Heart left ventricle (tissue), 16 donors: ENCODE measurements at regions of chr2 and their contacts with region 1.

Region 1: DNA sequence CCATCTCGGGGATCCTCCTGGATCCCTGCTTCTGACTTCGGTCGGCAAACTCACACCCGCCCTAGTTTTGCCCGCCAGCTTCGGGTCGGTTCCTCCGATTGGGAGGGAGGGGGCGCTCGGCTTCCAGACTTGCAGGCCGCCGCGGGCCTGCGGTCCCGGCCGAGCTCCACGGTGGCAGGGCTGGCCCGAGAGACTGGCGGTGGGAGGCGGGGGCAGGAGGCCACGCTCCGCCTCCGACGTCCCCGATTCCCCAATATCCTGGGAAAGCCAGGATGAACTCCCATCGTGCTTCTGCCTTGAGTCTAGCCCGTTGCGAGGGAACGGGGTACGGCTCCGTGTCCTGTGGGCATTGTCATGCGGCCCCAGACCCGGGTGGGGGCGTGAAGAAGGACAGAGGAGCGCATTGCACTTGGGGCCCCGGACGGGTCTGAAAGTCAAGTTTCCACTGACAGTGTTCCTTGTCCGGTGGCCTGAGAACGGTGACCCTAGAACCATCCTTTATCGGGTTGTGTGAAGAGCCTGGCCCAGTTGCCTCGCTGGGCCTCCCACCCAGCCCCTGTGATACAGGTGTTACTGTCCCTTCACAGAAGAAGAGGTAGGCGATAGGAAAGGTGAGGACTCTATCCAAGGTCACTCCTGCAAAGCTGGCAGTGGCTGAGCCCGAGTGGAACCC is 2.4 kb upstream of the INHBB start:
- DNase-seq: peak; percentile 83 to 90 (median 85)
- ATAC-seq: peak; percentile 75 to 92 (median 90)
- H3K4me3 ChIP-seq: peak overlapping the region in 10 of 12 donors; percentile 8 to 73 (median 58)
- H3K27ac ChIP-seq: peak overlapping the region in 4 of 12 donors; percentile 55 to 71 (median 65)
- H3K4me1 ChIP-seq: peaks cover 0 to 51% (median 27%) of the 10 kb centered on the region in 12 donors
- H3K27me3 ChIP-seq: peaks cover 21 to 81% (median 52%) of the 10 kb centered on the region in 9 donors
- CTCF ChIP-seq: peak; percentile 68 to 95 (median 87)
- POLR2A ChIP-seq: no peak

Region 2: DNA sequence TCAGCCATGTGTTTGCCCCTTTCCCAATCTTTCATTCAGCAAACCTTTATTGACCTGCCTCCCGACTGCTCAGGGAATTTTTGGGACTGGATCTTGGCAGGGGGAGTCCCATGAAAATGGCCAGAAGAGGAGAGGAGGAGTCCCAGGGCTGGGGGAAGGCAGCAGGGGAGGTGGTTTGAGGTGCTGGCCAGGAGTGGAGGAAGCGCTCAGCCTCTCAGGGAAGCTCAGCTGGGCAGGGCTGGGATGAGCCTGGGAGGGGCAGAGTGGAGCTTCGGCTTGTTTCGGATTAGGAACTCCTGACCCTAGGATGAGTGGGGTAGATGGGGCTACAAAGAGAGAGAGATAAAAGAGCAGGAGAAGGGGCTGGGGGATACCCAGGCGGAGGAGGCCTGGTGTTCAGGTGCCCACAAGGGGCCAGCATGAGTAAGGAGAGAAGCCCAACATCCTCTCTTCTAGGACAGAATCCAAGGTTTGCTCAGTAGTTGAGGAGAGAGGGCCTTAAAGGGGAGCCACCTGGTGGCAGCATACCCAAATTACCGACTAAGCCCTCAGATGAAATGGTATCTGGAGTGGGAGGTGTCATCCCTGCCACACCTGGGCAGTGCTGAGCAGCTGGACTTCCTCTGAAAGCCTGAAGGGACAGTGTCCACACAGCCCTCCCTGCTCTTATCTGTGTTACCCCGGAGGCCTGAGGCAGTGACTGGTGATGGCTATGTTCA is 93.5 kb after region 1 on chr2:
- intact Hi-C with region 1: loop called in 1 of 10 experiments (anchors 5 kb)
- DNase-seq: no peak
- ATAC-seq: no peak
- H3K4me3 ChIP-seq: no peak overlapping the region
- H3K27ac ChIP-seq: no peak overlapping the region
- H3K4me1 ChIP-seq: peaks cover 0 to 4% (median 4%) of the 10 kb centered on the region in 12 donors
- H3K27me3 ChIP-seq: peaks cover 0 to 29% (median 9%) of the 10 kb centered on the region in 9 donors
- CTCF ChIP-seq: peak in 8 of 12 donors; percentile 6 to 35 (median 17)
- POLR2A ChIP-seq: no peak

Region 3: DNA sequence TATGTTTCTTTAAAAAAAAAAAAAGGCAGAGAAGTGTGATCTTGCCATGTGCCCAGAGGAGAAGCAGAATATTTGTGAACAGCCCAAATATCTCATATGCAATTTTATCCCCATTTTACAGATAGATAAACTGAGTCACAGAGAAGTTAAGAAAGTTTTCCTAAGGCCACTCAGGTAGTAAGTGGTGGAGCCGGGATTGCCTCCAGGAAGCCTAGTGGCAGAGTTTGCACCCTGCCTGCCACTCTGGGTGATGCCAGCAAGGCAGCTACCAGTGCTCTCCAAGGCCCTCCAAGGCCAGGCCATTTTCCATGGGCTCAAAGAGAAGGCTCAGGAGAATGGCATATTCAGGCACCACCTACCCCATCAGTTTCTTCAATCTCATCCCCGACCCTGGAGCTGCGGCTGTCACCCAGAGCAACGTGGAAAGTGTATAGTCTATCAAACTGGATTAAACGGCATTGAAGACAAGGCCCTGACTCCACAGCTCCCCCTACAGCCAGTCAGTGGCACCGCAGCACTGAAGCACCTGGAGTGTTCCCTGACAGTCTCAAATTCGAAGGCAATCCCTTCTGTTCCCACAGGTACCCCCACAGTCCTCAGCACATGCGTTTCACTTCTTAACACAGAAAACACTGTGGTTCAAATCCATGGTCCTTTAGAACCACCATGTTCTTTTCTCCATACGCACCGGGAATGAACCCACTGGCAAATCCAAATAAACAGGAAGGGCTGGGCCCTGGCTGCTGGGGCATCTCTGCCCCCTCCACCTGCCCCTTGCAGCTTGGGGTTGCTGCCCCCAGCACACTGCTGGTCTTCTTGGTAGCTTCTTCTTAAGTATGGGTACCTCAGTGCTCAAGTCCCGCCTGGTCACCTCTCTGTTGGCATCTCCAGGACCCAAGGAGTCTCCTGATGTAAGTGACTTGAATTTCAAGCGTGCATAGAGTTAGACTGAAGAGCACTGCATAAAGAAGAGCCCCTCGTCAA is 177.7 kb after region 1 on chr2:
- intact Hi-C with region 1: loop called in 1 of 10 experiments (anchors 10 kb)
- DNase-seq: no peak
- ATAC-seq: peak in 1 of 4 donors; percentile 40
- H3K4me3 ChIP-seq: no peak overlapping the region
- H3K27ac ChIP-seq: peak overlapping the region in 1 of 12 donors; percentile 64
- H3K4me1 ChIP-seq: peaks cover 0 to 38% (median 23%) of the 10 kb centered on the region in 12 donors
- H3K27me3 ChIP-seq: peaks cover 0 to 29% (median 0%) of the 10 kb centered on the region in 9 donors
- CTCF ChIP-seq: peak; percentile 53 to 79 (median 69)
- POLR2A ChIP-seq: no peak

Region 4: DNA sequence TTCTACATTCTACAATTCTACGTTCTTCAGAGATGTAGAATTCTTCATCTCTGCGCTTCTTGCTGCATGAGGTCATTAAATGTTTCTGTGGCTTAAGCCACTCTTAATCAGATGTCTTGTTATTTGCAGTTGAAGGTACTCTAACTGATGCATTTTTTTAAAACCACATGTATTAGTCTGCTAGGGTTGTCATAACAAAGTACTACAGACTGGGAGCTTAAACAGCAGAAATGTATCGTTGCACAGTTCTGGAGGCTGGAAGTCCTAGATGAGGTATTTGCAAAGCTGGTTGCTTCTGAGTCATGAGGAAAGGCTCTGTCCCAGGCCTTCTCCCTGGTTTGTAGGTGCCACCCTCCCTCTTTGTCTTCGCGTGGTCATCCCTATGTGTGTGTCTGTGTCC is 215.8 kb after region 1 on chr2:
- intact Hi-C with region 1: loop called in 6 of 10 experiments (anchors 5 to 10 kb)
- DNase-seq: no peak
- ATAC-seq: peak in 1 of 4 donors; percentile 5
- H3K4me3 ChIP-seq: no peak overlapping the region
- H3K27ac ChIP-seq: no peak overlapping the region
- H3K4me1 ChIP-seq: peaks cover 0 to 12% (median 0%) of the 10 kb centered on the region in 12 donors
- H3K27me3 ChIP-seq: no peaks in the 10 kb centered on the region
- CTCF ChIP-seq: no peak
- POLR2A ChIP-seq: no peak

Region 5: DNA sequence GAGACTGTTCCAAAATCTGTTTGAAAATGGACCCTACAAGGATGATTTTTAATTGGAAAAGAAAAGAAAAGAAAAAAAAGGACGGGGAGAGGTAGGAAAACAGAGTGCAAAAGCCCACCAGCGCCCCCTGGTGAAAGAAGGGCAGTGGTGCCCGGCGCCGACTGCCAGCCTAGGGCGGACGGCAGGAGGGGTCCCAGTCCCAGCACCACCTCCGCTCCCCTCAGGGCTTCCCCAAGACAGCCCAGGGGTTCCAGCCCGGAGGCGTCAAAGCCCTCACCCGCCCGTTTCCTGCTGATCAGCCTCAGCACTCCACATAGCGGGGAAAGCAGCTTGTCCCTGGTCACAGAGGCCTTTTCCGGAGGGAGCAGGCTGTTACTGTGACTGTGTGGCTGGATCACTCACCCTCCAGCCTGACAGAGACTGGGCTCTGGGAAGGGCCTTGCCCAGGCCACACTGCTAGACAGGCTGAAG is 727.5 kb after region 1 on chr2:
- intact Hi-C with region 1: loop called in 3 of 10 experiments (anchors 5 to 10 kb)
- DNase-seq: peak; percentile 54 to 81 (median 59)
- ATAC-seq: peak; percentile 18 to 79 (median 48)
- H3K4me3 ChIP-seq: no peak overlapping the region
- H3K27ac ChIP-seq: no peak overlapping the region
- H3K4me1 ChIP-seq: peaks cover 0 to 8% (median 0%) of the 10 kb centered on the region in 12 donors
- H3K27me3 ChIP-seq: peaks cover 0 to 17% (median 4%) of the 10 kb centered on the region in 9 donors
- CTCF ChIP-seq: peak; percentile 83 to 96 (median 92)
- POLR2A ChIP-seq: no peak